Endothelial cell of umbilical vein (primary cell): ENCODE measurements at regions of chr19 and their contacts with region 1.

Region 1: GRCh38 chr19:57814505-57815251 is at the start of gene ZNF552:
- DNase-seq: peak; percentile 93
- H3K4me3 ChIP-seq: peak within 1 kb of the TSS; percentile 72 to 85 (median 76)
- H3K27ac ChIP-seq: peak within 1 kb of the TSS; percentile 26
- H3K4me1 ChIP-seq: peaks cover 2% of the 10 kb centered on the region
- H3K27me3 ChIP-seq: no peaks in the 10 kb centered on the region
- CTCF ChIP-seq: no peak
- POLR2A ChIP-seq: peak; percentile 90
- total RNA-seq, gene ZNF552: 6.1 and 6.5 TPM in 2 replicates

Region 2: GRCh38 chr19:57803594-57804325 is 10.9 kb before region 1 on chr19:
- CTCF ChIA-PET with region 1: interaction called, 8 read pairs
- POLR2A ChIA-PET with region 1: interaction called, 7 read pairs
- dilution Hi-C with region 1: no loop called
- intact Hi-C with region 1: loop called (anchors 1 kb)
- DNase-seq: peak; percentile 71
- H3K4me3 ChIP-seq: peak overlapping the region; percentile 41 to 78 (median 47)
- H3K27ac ChIP-seq: peak overlapping the region; percentile 69
- H3K4me1 ChIP-seq: peaks cover 26% of the 10 kb centered on the region
- H3K27me3 ChIP-seq: no peaks in the 10 kb centered on the region
- CTCF ChIP-seq: no peak
- POLR2A ChIP-seq: no peak